H1 (cell line): ENCODE measurements at regions of chr4 and their contacts with region 1.

Region 1: GRCh38 chr4:77358315-77358928 is 201.4 kb downstream of the CCNG2 start:
- DNase-seq: no peak
- H3K4me3 ChIP-seq: no peak overlapping the region
- H3K27ac ChIP-seq: no peak overlapping the region
- H3K4me1 ChIP-seq: peaks cover 0 to 2% (median 0%) of the 10 kb centered on the region in 4 experiments; a peak in 1 of 7 replicates
- H3K27me3 ChIP-seq: no peaks in the 10 kb centered on the region
- CTCF ChIP-seq: peak; percentile 24 to 75 (median 72)
- EP300 ChIP-seq: no peak
- POLR2A ChIP-seq: no peak
- RAD21 ChIP-seq: peak; percentile 62 to 74

Region 2: DNA sequence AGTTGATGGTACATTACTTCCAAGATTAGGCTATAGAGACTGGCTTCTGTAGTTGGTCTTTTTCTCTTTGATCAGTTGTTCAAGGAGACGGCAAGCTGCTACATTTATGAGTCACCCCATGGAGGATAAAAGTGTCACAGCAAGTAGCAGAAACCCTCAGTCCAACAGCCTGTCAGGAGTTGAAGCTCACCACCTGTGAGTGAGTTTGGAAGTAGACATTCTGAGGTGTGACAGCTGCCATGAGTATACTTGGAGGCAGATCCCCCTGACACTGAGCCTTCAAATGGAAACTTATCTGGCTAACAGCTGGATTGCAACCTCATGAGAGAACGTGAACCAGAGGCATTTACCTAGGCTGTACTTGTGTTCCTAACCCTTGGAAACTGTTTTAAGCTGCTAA is 133.4 kb before region 1 on chr4:
- CTCF ChIA-PET with region 1: interaction called, 25 read pairs
- POLR2A ChIA-PET with region 1: no interaction called
- DNase-seq: no peak
- H3K4me3 ChIP-seq: no peak overlapping the region
- H3K27ac ChIP-seq: no peak overlapping the region
- H3K4me1 ChIP-seq: no peaks in the 10 kb centered on the region
- H3K27me3 ChIP-seq: no peaks in the 10 kb centered on the region; a peak in 1 of 7 replicates
- CTCF ChIP-seq: no peak
- EP300 ChIP-seq: no peak
- POLR2A ChIP-seq: no peak
- RAD21 ChIP-seq: no peak

Region 3: DNA sequence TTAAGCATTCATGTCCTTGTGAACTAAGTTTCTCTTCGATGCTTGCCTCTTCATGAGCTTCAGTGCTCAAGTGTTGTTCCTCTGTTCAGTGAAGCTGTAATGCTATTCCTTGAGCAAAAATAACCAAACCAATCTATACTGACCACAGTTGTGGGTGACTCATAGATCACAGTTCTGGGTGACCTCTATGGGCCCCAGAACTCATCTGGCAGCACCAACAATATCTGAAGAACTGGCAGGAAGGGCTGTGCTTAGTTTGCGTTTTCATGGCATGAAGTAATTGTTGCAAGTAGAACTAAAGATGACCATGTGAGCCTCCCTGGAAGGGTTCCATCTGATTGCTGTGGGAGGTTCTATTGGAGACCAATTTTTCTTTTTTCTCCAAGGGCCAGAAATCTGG is 95.2 kb before region 1 on chr4:
- CTCF ChIA-PET with region 1: interaction called, 10 read pairs
- POLR2A ChIA-PET with region 1: no interaction called
- DNase-seq: no peak
- H3K4me3 ChIP-seq: no peak overlapping the region
- H3K27ac ChIP-seq: no peak overlapping the region
- H3K4me1 ChIP-seq: no peaks in the 10 kb centered on the region
- H3K27me3 ChIP-seq: 0 out of 7 replicates have a peak, but pooled peaks cover 0 to 2% (median 0%) of the 10 kb centered on the region in 4 experiments
- CTCF ChIP-seq: no peak
- EP300 ChIP-seq: no peak
- POLR2A ChIP-seq: no peak
- RAD21 ChIP-seq: no peak

Region 4: GRCh38 chr4:77308843-77309242 is 49.6 kb before region 1 on chr4:
- CTCF ChIA-PET with region 1: interaction called, 27 read pairs
- POLR2A ChIA-PET with region 1: no interaction called
- DNase-seq: no peak
- H3K4me3 ChIP-seq: no peak overlapping the region
- H3K27ac ChIP-seq: no peak overlapping the region
- H3K4me1 ChIP-seq: no peaks in the 10 kb centered on the region
- H3K27me3 ChIP-seq: no peaks in the 10 kb centered on the region; a peak in 1 of 7 replicates
- CTCF ChIP-seq: peak in 2 of 3 experiments; percentile 52 to 65; a peak in 3 of 4 replicates
- EP300 ChIP-seq: no peak
- POLR2A ChIP-seq: no peak
- RAD21 ChIP-seq: peak; percentile 77 to 83

Region 5: DNA sequence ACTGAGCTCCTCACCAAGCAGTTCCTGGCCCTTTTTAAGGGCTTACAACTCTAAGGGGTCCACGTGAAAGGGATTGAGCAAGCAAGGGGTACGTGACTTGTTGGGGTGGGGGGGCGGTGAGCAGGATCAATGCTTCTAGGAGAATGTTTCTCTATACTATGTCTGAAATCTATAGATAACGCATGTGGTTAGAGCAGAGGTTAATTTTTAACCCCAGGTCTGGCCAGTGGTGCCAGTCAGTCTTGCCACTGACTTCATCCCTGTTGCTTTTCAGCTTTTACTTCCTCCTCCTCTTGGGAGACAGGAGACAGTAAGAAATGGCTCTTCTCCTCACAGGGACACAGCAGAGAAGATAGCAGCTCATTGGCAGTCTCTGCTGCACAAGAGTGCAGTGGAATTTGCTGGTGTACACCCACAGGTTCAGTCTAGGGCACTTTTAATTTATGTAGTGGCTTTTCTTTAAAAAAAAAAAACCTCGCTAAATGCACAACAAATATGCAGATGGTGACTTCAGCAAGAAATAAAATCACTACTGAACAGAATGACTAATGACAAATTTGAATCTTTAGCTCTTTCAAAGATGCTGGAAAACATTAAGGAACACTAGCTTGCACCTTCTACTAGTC is 11.0 kb before region 1 on chr4:
- CTCF ChIA-PET with region 1: interaction called, 53 read pairs
- POLR2A ChIA-PET with region 1: no interaction called
- DNase-seq: no peak
- H3K4me3 ChIP-seq: no peak overlapping the region
- H3K27ac ChIP-seq: no peak overlapping the region
- H3K4me1 ChIP-seq: peaks cover 0 to 6% (median 1%) of the 10 kb centered on the region in 4 experiments; a peak in 1 of 7 replicates
- H3K27me3 ChIP-seq: no peaks in the 10 kb centered on the region
- CTCF ChIP-seq: no peak
- EP300 ChIP-seq: no peak
- POLR2A ChIP-seq: no peak
- RAD21 ChIP-seq: no peak

Region 6: DNA sequence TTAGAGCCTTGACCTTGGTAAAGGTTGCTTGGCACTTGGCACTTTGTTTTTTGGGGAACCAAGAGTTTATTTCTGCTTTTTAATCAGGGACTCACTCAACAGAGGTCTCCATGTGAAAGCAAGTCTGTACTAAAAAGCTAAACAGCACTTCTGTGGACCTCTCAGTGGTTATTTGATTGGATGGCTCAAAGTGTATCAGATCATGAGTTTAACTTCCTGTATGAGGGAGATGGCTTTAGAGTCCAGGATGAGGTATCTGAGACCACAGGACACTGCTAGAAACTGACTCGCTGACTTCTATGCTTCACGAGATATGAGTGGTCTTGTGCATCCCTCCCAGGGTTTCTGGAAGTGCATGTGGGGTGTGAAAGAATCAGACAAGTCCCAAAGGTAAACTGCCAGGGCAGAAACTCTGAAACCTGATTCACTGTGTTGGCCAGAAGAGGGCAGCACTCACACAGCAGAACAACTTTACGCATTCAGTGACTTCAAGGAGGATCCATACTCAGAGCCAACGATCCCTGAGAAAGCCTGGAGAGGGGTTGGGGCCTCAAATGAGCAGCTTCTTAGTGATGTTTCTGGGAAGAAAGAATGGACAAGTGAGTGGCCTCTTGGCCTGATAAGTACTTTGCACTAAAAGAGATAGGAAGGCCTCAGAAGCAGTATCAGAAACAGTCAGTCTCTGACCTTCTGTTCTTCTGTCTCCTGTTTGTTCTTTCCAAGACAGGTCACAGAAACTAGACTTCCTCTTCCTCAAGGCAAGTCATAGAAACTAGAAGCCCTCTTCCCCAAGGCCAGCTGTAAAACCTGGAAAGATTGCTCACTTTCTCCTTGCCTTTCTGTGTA is 26.9 kb after region 1 on chr4:
- CTCF ChIA-PET with region 1: interaction called, 47 read pairs
- POLR2A ChIA-PET with region 1: no interaction called
- DNase-seq: peak; percentile 33 to 73
- H3K4me3 ChIP-seq: no peak overlapping the region
- H3K27ac ChIP-seq: no peak overlapping the region
- H3K4me1 ChIP-seq: peaks cover 0 to 4% (median 3%) of the 10 kb centered on the region in 4 experiments; a peak in 2 of 7 replicates
- H3K27me3 ChIP-seq: peaks cover 0 to 1% (median 0%) of the 10 kb centered on the region in 4 experiments; a peak in 1 of 7 replicates
- CTCF ChIP-seq: peak; percentile 61 to 93 (median 92)
- EP300 ChIP-seq: no peak
- POLR2A ChIP-seq: no peak
- RAD21 ChIP-seq: peak; percentile 89 to 91

Region 7: GRCh38 chr4:77765720-77766119 is 407.3 kb after region 1 on chr4:
- CTCF ChIA-PET with region 1: no interaction called
- POLR2A ChIA-PET with region 1: no interaction called
- DNase-seq: no peak
- H3K4me3 ChIP-seq: no peak overlapping the region
- H3K27ac ChIP-seq: no peak overlapping the region
- H3K4me1 ChIP-seq: no peaks in the 10 kb centered on the region
- H3K27me3 ChIP-seq: no peaks in the 10 kb centered on the region
- CTCF ChIP-seq: no peak
- EP300 ChIP-seq: no peak
- POLR2A ChIP-seq: no peak
- RAD21 ChIP-seq: no peak